SK-N-SH (cell line): ENCODE measurements at regions of chr2 and their contacts with region 1.

Region 1: DNA sequence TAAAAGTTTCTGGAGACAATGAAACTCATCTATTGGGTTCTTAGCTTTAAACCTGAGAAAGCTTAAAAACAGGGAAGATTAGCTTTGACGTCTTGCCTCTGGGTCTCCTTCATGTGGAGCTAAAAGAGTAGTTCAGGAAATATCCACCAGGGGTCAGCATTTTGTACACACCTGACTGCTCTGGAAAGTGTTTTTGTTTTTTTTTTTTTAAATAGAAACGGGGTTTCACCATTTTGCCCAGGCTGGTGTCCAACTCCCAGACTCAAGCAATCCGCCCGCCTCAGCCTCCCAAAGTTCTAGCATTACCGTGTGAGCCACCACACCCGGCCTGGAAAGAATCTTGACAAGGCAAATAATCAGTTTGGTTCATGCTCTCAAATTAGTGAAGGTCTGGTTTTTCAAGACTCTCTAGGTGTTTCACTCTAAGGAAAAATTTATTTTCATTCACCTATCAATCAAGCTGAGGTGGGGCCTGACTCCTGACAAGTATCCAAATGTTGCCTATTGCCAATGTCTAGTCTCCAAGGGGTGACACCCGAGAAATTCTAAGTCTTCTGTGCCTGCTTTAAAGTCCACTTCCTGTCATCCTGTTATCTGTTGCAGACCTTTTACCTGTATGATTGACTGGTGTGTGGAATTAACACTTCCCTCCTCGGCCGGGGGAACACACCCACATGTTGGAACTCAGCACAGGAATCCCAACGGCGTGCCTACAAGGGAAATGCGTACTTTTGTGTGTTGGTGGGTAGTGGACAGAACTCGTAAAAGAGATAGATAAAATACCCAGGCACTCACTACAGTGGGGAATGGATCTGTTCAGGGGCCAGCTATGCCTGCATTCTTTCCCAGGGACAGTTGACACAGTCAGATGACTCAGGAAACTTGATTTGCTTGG is 11.3 kb downstream of the IL1RN start:
- DNase-seq: peak; percentile 49
- H3K4me3 ChIP-seq: no peak overlapping the region
- H3K27ac ChIP-seq: no peak overlapping the region
- H3K4me1 ChIP-seq: no peaks in the 10 kb centered on the region
- H3K27me3 ChIP-seq: peaks cover 19% of the 10 kb centered on the region; the same call in 1 of the 2 replicates
- CTCF ChIP-seq: peak; percentile 81
- EP300 ChIP-seq: no peak
- RAD21 ChIP-seq: peak; percentile 55

Region 2: GRCh38 chr2:113117541-113118262 is 21.0 kb before region 1 on chr2:
- CTCF ChIA-PET with region 1: interaction called, 51 read pairs
- POLR2A ChIA-PET with region 1: no interaction called
- DNase-seq: no peak
- H3K4me3 ChIP-seq: no peak overlapping the region
- H3K27ac ChIP-seq: no peak overlapping the region
- H3K4me1 ChIP-seq: no peaks in the 10 kb centered on the region; a peak in 1 of 4 replicates
- H3K27me3 ChIP-seq: no peaks in the 10 kb centered on the region; the same call in 1 of the 2 replicates
- CTCF ChIP-seq: no peak
- EP300 ChIP-seq: no peak
- RAD21 ChIP-seq: no peak

Region 3: DNA sequence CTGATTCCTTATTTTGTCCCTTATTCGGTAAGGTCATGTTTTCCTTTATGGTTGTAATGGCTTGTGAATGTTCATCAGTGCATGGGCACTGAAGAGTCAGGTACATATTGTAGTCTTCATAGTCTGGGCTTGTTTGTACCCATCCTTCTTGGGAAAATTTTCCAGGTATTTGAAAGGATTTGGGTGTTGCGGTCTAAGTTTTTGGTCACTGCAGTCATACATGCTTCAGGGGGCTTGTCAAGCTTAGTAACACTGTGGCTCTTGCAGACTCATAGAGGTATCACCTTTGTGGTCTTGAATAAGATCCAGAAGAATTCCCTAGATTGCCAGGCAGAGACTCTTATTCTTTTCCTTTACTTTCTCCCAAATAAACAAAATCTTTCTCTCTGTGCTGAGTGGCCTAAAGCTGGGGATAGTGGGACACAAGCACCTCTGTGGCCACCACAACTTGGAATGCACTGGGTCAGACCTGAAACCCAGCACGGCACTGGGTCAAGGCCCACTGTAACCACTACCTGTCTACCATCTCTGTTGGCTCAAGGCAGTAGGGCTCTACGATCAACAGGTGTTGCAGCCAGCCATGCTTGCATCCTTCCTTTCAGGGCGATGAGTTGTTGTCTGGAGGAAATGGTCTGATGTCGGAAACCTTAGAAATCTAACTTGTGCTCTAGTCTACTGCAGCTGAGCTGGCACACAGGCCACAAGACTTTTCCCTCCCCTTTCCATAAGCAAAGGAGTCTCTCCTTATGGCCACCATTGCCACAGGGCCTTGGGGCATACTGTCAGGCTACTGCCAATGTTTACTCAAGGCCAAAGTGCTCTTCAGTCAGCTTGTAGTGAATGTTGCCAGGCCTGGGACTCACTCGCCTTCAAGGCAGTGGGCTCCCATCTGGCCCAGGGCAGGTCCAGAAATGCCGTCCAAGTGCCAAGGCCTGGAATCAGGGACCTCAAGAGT is 10.2 kb after region 1 on chr2:
- CTCF ChIA-PET with region 1: interaction called, 23 read pairs
- POLR2A ChIA-PET with region 1: no interaction called
- DNase-seq: no peak
- H3K4me3 ChIP-seq: no peak overlapping the region
- H3K27ac ChIP-seq: no peak overlapping the region
- H3K4me1 ChIP-seq: no peaks in the 10 kb centered on the region
- H3K27me3 ChIP-seq: no peaks in the 10 kb centered on the region; the same call in 1 of the 2 replicates
- CTCF ChIP-seq: no peak
- EP300 ChIP-seq: no peak
- RAD21 ChIP-seq: no peak

Region 4: GRCh38 chr2:113164930-113165585 is 26.4 kb after region 1 on chr2:
- CTCF ChIA-PET with region 1: interaction called, 24 read pairs
- POLR2A ChIA-PET with region 1: no interaction called
- DNase-seq: no peak
- H3K4me3 ChIP-seq: no peak overlapping the region
- H3K27ac ChIP-seq: no peak overlapping the region
- H3K4me1 ChIP-seq: no peaks in the 10 kb centered on the region
- H3K27me3 ChIP-seq: no peaks in the 10 kb centered on the region; the same call in 1 of the 2 replicates
- CTCF ChIP-seq: no peak
- EP300 ChIP-seq: no peak
- RAD21 ChIP-seq: no peak

Region 5: DNA sequence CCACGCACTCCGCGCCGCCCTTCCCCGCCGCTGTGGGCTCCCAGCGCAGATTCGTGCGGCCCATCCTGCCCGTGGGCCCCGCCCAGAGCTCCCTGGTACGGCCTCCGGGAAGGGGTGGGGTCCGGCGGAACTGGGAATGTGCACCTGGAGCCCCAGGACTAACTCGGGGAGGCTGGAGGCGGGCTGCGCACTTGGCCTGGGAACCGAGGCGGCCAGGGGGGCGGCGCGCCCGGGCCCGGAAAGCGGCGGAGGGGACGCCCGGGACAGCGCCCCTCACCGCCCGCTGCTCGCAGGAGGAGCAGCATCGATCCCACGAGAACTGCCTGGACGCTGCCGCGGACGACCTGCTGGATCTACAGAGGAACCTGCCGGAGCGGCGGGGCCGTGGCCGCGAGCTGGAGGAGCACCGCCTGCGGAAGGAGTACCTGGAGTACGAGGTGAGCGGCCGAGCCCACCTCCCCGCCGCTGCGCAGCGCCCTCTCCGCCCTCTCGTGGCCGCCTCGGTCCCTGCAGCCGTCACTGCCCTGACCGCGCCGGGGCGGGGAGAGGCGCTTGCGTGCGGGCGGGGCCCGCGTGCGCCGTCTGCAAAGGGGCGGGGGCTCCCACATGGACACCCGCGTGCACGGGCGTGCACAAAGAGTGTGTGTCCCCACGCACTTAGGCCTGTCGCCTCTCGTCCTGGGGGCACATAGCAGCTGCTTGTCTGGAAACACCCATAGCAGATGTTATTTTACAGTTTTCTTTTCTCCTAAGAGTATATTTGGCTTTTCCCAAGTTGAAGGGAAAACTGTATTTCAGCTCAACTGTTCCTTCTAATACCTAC is 60.3 kb after region 1 on chr2:
- CTCF ChIA-PET with region 1: interaction called, 59 read pairs
- POLR2A ChIA-PET with region 1: no interaction called
- DNase-seq: peak; percentile 95
- H3K4me3 ChIP-seq: peak overlapping the region; percentile 66 to 81
- H3K27ac ChIP-seq: no peak overlapping the region; a peak in 1 of 4 replicates
- H3K4me1 ChIP-seq: no peaks in the 10 kb centered on the region; a peak in 1 of 4 replicates
- H3K27me3 ChIP-seq: peaks cover 10% of the 10 kb centered on the region; the same call in 1 of the 2 replicates
- CTCF ChIP-seq: peak; percentile 83
- EP300 ChIP-seq: no peak
- RAD21 ChIP-seq: peak; percentile 36

Region 6: GRCh38 chr2:113248997-113249770 is 110.5 kb after region 1 on chr2:
- CTCF ChIA-PET with region 1: interaction called, 20 read pairs
- POLR2A ChIA-PET with region 1: no interaction called
- DNase-seq: peak; percentile 77
- H3K4me3 ChIP-seq: no peak overlapping the region; a peak in 1 of 4 replicates
- H3K27ac ChIP-seq: no peak overlapping the region
- H3K4me1 ChIP-seq: no peaks in the 10 kb centered on the region
- H3K27me3 ChIP-seq: no peaks in the 10 kb centered on the region; the same call in 1 of the 2 replicates
- CTCF ChIP-seq: peak; percentile 95
- EP300 ChIP-seq: no peak
- RAD21 ChIP-seq: peak; percentile 83

Region 7: DNA sequence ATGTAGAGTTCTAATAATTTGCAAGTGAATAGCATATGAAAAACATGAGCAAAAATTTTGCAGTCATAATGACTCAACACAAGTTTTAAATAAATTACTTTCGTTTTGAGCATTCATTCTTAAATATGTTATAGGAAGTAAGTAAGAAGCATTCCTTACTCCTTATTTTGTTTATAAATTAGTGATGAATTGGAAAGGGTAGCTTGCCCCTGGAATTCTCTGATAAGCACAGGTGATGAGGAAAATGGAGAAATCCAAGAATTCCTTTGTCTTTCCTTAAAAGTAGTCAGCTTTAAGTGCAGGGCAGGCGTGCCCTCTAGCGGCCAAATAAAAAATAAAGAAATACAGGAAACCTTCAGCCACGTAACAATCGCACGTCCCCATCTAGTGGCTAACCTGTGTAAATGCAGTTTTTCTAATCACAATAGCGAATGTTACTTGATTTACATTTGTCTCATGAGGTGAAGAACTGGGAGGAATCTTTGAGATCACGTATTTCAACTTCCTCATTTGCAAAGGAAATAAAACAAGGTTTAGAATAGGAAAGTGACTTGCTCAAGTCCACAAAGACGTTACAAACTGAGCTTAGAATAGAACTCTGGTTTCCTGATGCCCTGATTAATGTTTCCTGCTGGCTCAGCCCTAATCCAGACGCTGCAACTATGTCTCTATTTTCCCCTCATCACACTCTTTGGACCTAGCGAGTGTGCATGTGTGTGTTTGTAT is 251.6 kb after region 1 on chr2:
- CTCF ChIA-PET with region 1: interaction called, 68 read pairs
- POLR2A ChIA-PET with region 1: no interaction called
- DNase-seq: peak; percentile 75
- H3K4me3 ChIP-seq: peak overlapping the region; percentile 24 to 66; a peak in 3 of 4 replicates
- H3K27ac ChIP-seq: no peak overlapping the region; a peak in 1 of 4 replicates
- H3K4me1 ChIP-seq: no peaks in the 10 kb centered on the region
- H3K27me3 ChIP-seq: peaks cover 37% of the 10 kb centered on the region; the same call in 1 of the 2 replicates
- CTCF ChIP-seq: peak; percentile 99
- EP300 ChIP-seq: no peak
- RAD21 ChIP-seq: peak; percentile 89